ENCODE measurements at regions of chrX and their contacts with region 1.

Region 1: GRCh38 chrX:39883666-39884065 is 214.1 kb downstream of the BCOR start:
- DNase-seq: peak; percentile 72
- H3K4me3 Mint-ChIP-seq: no peak overlapping the region
- H3K27ac Mint-ChIP-seq: peak overlapping the region; percentile 79
- H3K4me1 Mint-ChIP-seq: peaks cover 25% of the 10 kb centered on the region
- H3K27me3 Mint-ChIP-seq: no peaks in the 10 kb centered on the region

Region 2: GRCh38 chrX:39777623-39778025 is 106.0 kb before region 1 on chrX:
- CTCF ChIA-PET with region 1: no interaction called
- intact Hi-C with region 1: loop called (anchors 1 kb)
- DNase-seq: peak; percentile 72
- H3K4me3 Mint-ChIP-seq: no peak overlapping the region
- H3K27ac Mint-ChIP-seq: peak overlapping the region; percentile 89
- H3K4me1 Mint-ChIP-seq: peaks cover 43% of the 10 kb centered on the region
- H3K27me3 Mint-ChIP-seq: no peaks in the 10 kb centered on the region

Region 3: GRCh38 chrX:39848900-39849299 is 34.8 kb before region 1 on chrX:
- CTCF ChIA-PET with region 1: no interaction called
- intact Hi-C with region 1: no loop called
- DNase-seq: no peak
- H3K4me3 Mint-ChIP-seq: no peak overlapping the region
- H3K27ac Mint-ChIP-seq: no peak overlapping the region
- H3K4me1 Mint-ChIP-seq: peaks cover 23% of the 10 kb centered on the region
- H3K27me3 Mint-ChIP-seq: no peaks in the 10 kb centered on the region